ENCODE measurements at regions of chr1 and their contacts with region 1.

Region 1: GRCh38 chr1:94329986-94330385 is 88.2 kb upstream of the ABCD3 start:
- DNase-seq: peak; percentile 19
- H3K4me3 ChIP-seq: no peak overlapping the region
- H3K27ac ChIP-seq: no peak overlapping the region
- H3K4me1 ChIP-seq: peaks cover 42% of the 10 kb centered on the region
- H3K27me3 ChIP-seq: no peaks in the 10 kb centered on the region
- CTCF ChIP-seq: peak in 1 of 3 experiments; percentile 35
- POLR2A ChIP-seq: no peak

Region 2: GRCh38 chr1:94247138-94248094 is 82.6 kb before region 1 on chr1:
- intact Hi-C with region 1: loop called (anchors 10 kb)
- DNase-seq: peak; percentile 80
- H3K4me3 ChIP-seq: peak overlapping the region; percentile 66 to 75
- H3K27ac ChIP-seq: peak overlapping the region; percentile 50 to 79
- H3K4me1 ChIP-seq: peaks cover 3% of the 10 kb centered on the region
- H3K27me3 ChIP-seq: no peaks in the 10 kb centered on the region
- CTCF ChIP-seq: no peak
- POLR2A ChIP-seq: no peak

Region 3: GRCh38 chr1:94258873-94259331 is 71.1 kb before region 1 on chr1:
- intact Hi-C with region 1: no loop called
- DNase-seq: no peak
- H3K4me3 ChIP-seq: no peak overlapping the region
- H3K27ac ChIP-seq: no peak overlapping the region
- H3K4me1 ChIP-seq: no peaks in the 10 kb centered on the region
- H3K27me3 ChIP-seq: no peaks in the 10 kb centered on the region
- CTCF ChIP-seq: no peak
- POLR2A ChIP-seq: no peak

Region 4: DNA sequence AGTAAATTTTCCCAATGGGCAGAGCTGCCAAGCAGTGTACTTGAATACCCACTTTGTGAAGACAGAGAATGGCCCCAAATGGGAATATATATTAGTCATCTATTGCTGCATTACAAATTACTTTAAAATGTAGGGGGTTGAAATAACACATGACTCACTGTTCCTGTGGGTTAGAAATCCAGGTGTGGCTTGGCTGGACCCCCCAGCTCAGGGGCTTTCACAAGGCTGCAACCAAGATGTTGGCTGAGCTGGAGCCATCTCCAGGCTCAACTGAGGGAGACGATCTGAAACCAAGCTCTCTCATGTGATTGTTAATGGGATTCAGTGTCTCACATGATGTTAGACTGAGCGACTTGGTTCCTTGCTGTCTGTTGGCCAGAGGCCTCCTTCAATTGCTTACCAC is 59.2 kb before region 1 on chr1:
- intact Hi-C with region 1: no loop called
- DNase-seq: no peak
- H3K4me3 ChIP-seq: no peak overlapping the region
- H3K27ac ChIP-seq: no peak overlapping the region
- H3K4me1 ChIP-seq: peaks cover 5% of the 10 kb centered on the region
- H3K27me3 ChIP-seq: no peaks in the 10 kb centered on the region
- CTCF ChIP-seq: no peak
- POLR2A ChIP-seq: no peak

Region 5: DNA sequence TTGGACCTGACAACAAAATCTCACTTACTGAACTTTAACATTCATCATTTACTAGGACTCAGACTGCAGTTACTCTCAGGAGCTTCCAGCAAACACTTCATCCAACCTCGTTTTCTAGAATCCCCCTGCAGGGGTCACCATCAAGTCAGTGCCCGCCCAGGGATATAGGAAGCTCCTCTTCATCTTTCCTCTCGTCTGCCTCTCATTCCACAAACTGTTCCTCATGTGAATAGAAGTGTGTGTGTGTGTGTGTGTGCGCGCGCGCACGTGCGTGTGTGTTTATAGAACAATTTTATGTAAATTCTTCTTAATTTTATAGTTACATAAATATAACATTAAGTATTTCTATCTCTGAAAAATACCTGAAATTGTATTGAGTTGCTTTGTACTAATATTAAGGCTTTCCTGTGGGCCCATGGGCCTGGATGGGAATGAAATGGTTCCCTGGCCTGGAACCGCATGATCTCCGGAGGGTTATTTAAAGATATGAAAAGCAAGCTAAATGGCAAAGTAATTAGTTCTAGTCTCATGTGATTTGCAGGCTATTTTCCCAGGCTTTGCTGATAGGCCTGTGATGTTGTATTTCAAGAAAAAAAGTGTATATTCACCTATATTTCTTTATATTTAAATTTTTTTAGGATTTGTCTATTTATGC is 66.5 kb after region 1 on chr1:
- intact Hi-C with region 1: no loop called
- DNase-seq: no peak
- H3K4me3 ChIP-seq: no peak overlapping the region
- H3K27ac ChIP-seq: no peak overlapping the region
- H3K4me1 ChIP-seq: no peaks in the 10 kb centered on the region
- H3K27me3 ChIP-seq: no peaks in the 10 kb centered on the region
- CTCF ChIP-seq: no peak
- POLR2A ChIP-seq: no peak